Endothelial cell of umbilical vein (primary cell): ENCODE measurements at regions of chr4 and their contacts with region 1.

Region 1: DNA sequence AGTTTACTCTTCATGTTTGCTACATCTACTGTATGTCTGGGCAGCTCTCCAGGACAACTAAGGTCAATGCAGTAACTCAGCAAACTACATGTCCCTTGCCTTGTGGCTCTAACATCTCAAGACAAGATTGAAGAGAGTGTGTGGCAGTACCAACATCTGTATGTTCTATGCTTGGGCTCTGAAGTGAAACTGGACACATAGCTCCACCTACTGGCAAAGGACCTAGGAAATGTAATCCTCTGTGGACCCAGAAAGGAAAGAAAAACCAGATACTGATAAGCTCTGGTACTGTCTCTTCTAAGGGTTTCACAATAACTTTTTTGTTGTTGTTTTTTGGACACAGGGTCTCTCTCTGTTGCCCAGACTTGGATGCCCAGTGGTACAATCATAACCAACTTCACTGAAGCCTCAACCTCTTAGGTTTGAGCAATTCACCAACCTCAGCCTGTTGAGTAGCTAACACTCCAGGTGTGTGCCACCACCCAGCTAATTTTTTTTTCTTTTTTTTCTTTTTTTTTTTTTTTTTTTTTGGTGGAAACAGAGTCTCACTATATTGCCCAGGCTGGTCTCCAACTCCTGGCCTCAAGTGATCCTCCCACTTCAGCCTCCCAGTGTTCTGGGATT is 64.1 kb downstream of the QDPR start:
- DNase-seq: peak; percentile 66
- H3K4me3 ChIP-seq: no peak overlapping the region
- H3K27ac ChIP-seq: no peak overlapping the region
- H3K4me1 ChIP-seq: peaks cover 9% of the 10 kb centered on the region
- H3K27me3 ChIP-seq: no peaks in the 10 kb centered on the region
- CTCF ChIP-seq: peak; percentile 58 to 62
- POLR2A ChIP-seq: no peak

Region 2: GRCh38 chr4:16443504-16444088 is 1004.2 kb before region 1 on chr4:
- CTCF ChIA-PET with region 1: no interaction called
- POLR2A ChIA-PET with region 1: no interaction called
- dilution Hi-C with region 1: no loop called
- intact Hi-C with region 1: loop called (anchors 10 kb)
- DNase-seq: peak; percentile 47
- H3K4me3 ChIP-seq: no peak overlapping the region
- H3K27ac ChIP-seq: no peak overlapping the region
- H3K4me1 ChIP-seq: no peaks in the 10 kb centered on the region
- H3K27me3 ChIP-seq: peaks cover 9 to 10% of the 10 kb centered on the region in 2 experiments
- CTCF ChIP-seq: peak; percentile 56 to 63
- POLR2A ChIP-seq: no peak

Region 3: DNA sequence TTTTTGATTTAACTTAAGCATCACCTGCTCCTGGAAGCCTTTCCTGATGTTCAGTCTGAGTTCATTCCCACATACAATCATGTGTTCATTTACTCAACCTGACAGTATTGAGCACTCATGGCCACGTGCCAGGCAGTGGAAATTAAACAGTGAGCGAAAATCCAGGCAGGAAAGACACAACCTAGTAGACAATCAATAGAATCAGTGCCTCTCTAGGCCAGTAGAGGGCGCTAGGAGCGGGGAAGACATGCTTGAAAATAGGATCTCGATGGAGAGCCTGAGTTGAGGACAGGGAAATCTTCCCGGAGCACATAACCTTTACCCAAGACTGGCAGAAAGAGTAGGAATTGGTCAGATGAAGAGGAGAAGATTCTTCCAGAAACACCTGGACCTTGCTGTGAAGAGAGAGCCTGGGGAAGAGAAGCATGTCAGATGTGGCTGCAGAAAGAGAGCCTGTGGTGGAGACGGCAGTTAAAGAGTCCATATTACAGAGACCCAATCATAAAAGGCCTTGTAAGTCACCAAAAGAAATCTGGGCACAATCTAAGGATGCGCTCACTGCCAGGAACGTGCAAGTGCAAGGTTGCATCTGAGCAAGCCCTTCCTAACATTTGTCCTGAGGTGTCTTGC is 652.9 kb before region 1 on chr4:
- CTCF ChIA-PET with region 1: interaction called, 17 read pairs
- POLR2A ChIA-PET with region 1: no interaction called
- dilution Hi-C with region 1: no loop called
- intact Hi-C with region 1: no loop called
- DNase-seq: peak; percentile 83
- H3K4me3 ChIP-seq: no peak overlapping the region
- H3K27ac ChIP-seq: no peak overlapping the region
- H3K4me1 ChIP-seq: peaks cover 19% of the 10 kb centered on the region
- H3K27me3 ChIP-seq: no peaks in the 10 kb centered on the region
- CTCF ChIP-seq: peak; percentile 90 to 91
- POLR2A ChIP-seq: no peak

Region 4: GRCh38 chr4:16881151-16881884 is 566.5 kb before region 1 on chr4:
- CTCF ChIA-PET with region 1: no interaction called
- POLR2A ChIA-PET with region 1: no interaction called
- dilution Hi-C with region 1: no loop called
- intact Hi-C with region 1: no loop called
- DNase-seq: no peak
- H3K4me3 ChIP-seq: no peak overlapping the region
- H3K27ac ChIP-seq: no peak overlapping the region
- H3K4me1 ChIP-seq: no peaks in the 10 kb centered on the region
- H3K27me3 ChIP-seq: no peaks in the 10 kb centered on the region
- CTCF ChIP-seq: no peak
- POLR2A ChIP-seq: no peak

Region 5: GRCh38 chr4:17166954-17167353 is 280.8 kb before region 1 on chr4:
- CTCF ChIA-PET with region 1: no interaction called
- POLR2A ChIA-PET with region 1: no interaction called
- dilution Hi-C with region 1: no loop called
- intact Hi-C with region 1: no loop called
- DNase-seq: peak; percentile 5
- H3K4me3 ChIP-seq: no peak overlapping the region
- H3K27ac ChIP-seq: no peak overlapping the region
- H3K4me1 ChIP-seq: peaks cover 7% of the 10 kb centered on the region
- H3K27me3 ChIP-seq: peaks cover 2 to 3% of the 10 kb centered on the region in 2 experiments
- CTCF ChIP-seq: no peak
- POLR2A ChIP-seq: no peak

Region 6: GRCh38 chr4:17347445-17347844 is 100.3 kb before region 1 on chr4:
- CTCF ChIA-PET with region 1: interaction called, 54 read pairs
- POLR2A ChIA-PET with region 1: no interaction called
- dilution Hi-C with region 1: no loop called
- intact Hi-C with region 1: loop called (anchors 1 kb)
- DNase-seq: peak; percentile 40
- H3K4me3 ChIP-seq: no peak overlapping the region
- H3K27ac ChIP-seq: no peak overlapping the region
- H3K4me1 ChIP-seq: no peaks in the 10 kb centered on the region
- H3K27me3 ChIP-seq: no peaks in the 10 kb centered on the region
- CTCF ChIP-seq: peak; percentile 44 to 57
- POLR2A ChIP-seq: no peak

Region 7: GRCh38 chr4:17468371-17469221 is 20.8 kb after region 1 on chr4:
- CTCF ChIA-PET with region 1: interaction called, 34 read pairs
- POLR2A ChIA-PET with region 1: interaction called, 8 read pairs
- dilution Hi-C with region 1: no loop called
- intact Hi-C with region 1: no loop called
- DNase-seq: peak; percentile 58
- H3K4me3 ChIP-seq: no peak overlapping the region
- H3K27ac ChIP-seq: no peak overlapping the region
- H3K4me1 ChIP-seq: no peaks in the 10 kb centered on the region
- H3K27me3 ChIP-seq: no peaks in the 10 kb centered on the region
- CTCF ChIP-seq: peak; percentile 28 to 52
- POLR2A ChIP-seq: no peak

Region 8: DNA sequence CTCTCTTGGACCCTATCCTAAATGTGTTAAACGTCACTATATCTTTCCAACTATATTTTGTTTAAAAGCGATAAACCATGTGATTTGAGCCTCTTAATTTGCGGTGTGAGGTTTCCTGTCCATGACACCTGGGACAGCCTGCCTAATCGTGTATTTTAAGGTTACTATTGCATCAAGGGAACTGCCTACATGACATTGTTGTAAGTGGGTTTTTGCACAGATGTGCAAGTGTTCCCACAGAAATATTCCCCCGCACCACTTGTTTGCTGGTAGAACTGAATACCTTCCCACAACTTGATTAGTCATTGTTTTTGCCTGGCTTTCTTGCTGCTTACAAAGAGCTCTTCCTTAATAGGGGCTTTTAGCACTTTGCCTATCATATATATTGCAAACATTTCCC is 338.8 kb after region 1 on chr4:
- CTCF ChIA-PET with region 1: no interaction called
- POLR2A ChIA-PET with region 1: no interaction called
- dilution Hi-C with region 1: no loop called
- intact Hi-C with region 1: no loop called
- DNase-seq: no peak
- H3K4me3 ChIP-seq: no peak overlapping the region
- H3K27ac ChIP-seq: no peak overlapping the region
- H3K4me1 ChIP-seq: peaks cover 2% of the 10 kb centered on the region
- H3K27me3 ChIP-seq: peaks cover 9 to 11% of the 10 kb centered on the region in 2 experiments
- CTCF ChIP-seq: no peak
- POLR2A ChIP-seq: no peak